CD8-positive, alpha-beta T cell (primary cell): ENCODE measurements at regions of chr22 and their contacts with region 1.

Region 1: GRCh38 chr22:37457093-37457893 is 28.9 kb downstream of the MFNG start:
- DNase-seq: peak; percentile 72 to 90 (median 83)
- ATAC-seq: peak; percentile 98
- H3K4me3 ChIP-seq: no peak overlapping the region
- H3K4me3 Mint-ChIP-seq: no peak overlapping the region
- H3K27ac ChIP-seq: no peak overlapping the region
- H3K27ac Mint-ChIP-seq: no peak overlapping the region
- H3K4me1 ChIP-seq: no peaks in the 10 kb centered on the region
- H3K4me1 Mint-ChIP-seq: no peaks in the 10 kb centered on the region
- H3K27me3 ChIP-seq: no peaks in the 10 kb centered on the region
- H3K27me3 Mint-ChIP-seq: no peaks in the 10 kb centered on the region
- CTCF ChIP-seq: peak; percentile 82

Region 2: DNA sequence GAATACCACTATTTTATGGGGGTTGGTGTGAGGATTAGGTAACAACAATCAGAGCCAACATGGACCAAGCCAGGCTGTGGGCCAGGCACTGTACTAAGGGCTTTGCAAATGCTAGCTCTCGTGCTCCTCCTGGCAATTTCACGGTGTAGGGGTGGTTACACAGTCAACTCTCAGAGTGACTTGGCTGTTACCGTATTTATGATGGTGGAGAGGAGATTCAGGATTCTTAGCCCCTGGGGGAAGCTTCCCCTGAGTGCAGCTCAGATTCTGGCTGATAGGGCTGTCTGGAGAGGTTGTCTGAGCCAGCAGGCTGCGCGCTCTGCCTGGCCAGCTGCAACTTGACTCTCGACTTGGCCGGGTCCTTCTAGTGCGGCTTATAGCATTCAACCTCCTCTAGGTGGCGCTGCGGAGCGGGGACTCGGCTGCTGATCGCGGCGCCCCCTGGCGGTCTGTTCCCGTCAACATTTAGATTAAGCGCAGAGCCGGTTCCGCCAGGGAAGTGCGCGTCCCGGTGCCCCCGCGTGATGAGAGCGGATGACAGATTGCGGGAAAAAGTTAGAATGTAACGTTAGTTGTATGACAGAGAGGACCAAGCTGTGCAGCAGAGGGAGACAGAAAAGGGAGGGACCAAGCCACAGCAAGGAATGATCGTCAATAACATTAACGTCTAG is 601.0 kb before region 1 on chr22:
- CTCF ChIA-PET with region 1: no interaction called
- POLR2A ChIA-PET with region 1: no interaction called
- intact Hi-C with region 1: loop called in 1 of 2 experiments (anchors 5 kb)
- DNase-seq: peak; percentile 86 to 99 (median 94)
- ATAC-seq: peak; percentile 78
- H3K4me3 ChIP-seq: no peak overlapping the region
- H3K4me3 Mint-ChIP-seq: peak overlapping the region; percentile 13
- H3K27ac ChIP-seq: no peak overlapping the region
- H3K27ac Mint-ChIP-seq: no peak overlapping the region
- H3K4me1 ChIP-seq: peaks cover 16% of the 10 kb centered on the region
- H3K4me1 Mint-ChIP-seq: peaks cover 13% of the 10 kb centered on the region
- H3K27me3 ChIP-seq: no peaks in the 10 kb centered on the region
- H3K27me3 Mint-ChIP-seq: no peaks in the 10 kb centered on the region
- CTCF ChIP-seq: peak; percentile 100

Region 3: GRCh38 chr22:37166675-37167066 is 290.6 kb before region 1 on chr22:
- CTCF ChIA-PET with region 1: no interaction called
- POLR2A ChIA-PET with region 1: no interaction called
- intact Hi-C with region 1: loop called in 1 of 2 experiments (anchors 2 kb)
- DNase-seq: peak; percentile 73 to 92 (median 86)
- ATAC-seq: peak; percentile 43
- H3K4me3 ChIP-seq: peak overlapping the region; percentile 42 to 60
- H3K4me3 Mint-ChIP-seq: peak overlapping the region; percentile 91
- H3K27ac ChIP-seq: peak overlapping the region; percentile 49 to 75
- H3K27ac Mint-ChIP-seq: peak overlapping the region; percentile 94
- H3K4me1 ChIP-seq: peaks cover 88% of the 10 kb centered on the region
- H3K4me1 Mint-ChIP-seq: peaks cover 96% of the 10 kb centered on the region
- H3K27me3 ChIP-seq: no peaks in the 10 kb centered on the region
- H3K27me3 Mint-ChIP-seq: no peaks in the 10 kb centered on the region
- CTCF ChIP-seq: peak; percentile 91

Region 4: DNA sequence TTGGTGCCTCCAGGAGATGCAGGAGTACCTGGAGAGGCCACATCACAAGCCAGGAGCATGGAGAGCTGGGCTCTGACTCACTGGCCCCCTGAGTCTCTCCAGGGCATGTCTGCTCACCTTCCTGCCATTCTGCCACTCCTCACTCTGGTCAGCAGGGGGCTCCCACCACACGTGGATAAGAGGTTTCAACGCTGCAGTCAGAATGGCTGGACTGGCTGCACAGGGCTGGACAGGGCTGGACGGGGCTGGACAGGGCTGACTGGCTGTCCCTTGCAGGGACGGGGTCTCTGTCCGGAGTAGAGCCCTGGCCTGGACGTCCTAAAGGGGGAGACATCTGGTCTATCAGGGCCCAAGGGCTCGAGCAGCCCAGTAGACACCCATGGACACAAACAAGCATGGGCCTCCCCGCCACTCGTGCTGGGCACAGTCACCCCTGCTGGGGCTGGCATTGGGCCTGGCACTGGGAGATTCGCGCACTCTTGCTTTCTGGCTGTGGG is 140.4 kb before region 1 on chr22:
- CTCF ChIA-PET with region 1: interaction called, 34 read pairs
- POLR2A ChIA-PET with region 1: no interaction called
- intact Hi-C with region 1: loop called (anchors 1 kb)
- DNase-seq: peak; percentile 37 to 85 (median 72)
- ATAC-seq: peak; percentile 91
- H3K4me3 ChIP-seq: no peak overlapping the region
- H3K4me3 Mint-ChIP-seq: no peak overlapping the region
- H3K27ac ChIP-seq: no peak overlapping the region
- H3K27ac Mint-ChIP-seq: no peak overlapping the region
- H3K4me1 ChIP-seq: peaks cover 36% of the 10 kb centered on the region
- H3K4me1 Mint-ChIP-seq: peaks cover 42% of the 10 kb centered on the region
- H3K27me3 ChIP-seq: no peaks in the 10 kb centered on the region
- H3K27me3 Mint-ChIP-seq: no peaks in the 10 kb centered on the region
- CTCF ChIP-seq: peak; percentile 85

Region 5: GRCh38 chr22:37472418-37473006 is 15.2 kb after region 1 on chr22:
- CTCF ChIA-PET with region 1: interaction called, 23 read pairs
- POLR2A ChIA-PET with region 1: no interaction called
- intact Hi-C with region 1: no loop called
- DNase-seq: peak in 8 of 9 experiments; percentile 19 to 71 (median 60)
- ATAC-seq: peak; percentile 44
- H3K4me3 ChIP-seq: no peak overlapping the region
- H3K4me3 Mint-ChIP-seq: no peak overlapping the region
- H3K27ac ChIP-seq: no peak overlapping the region
- H3K27ac Mint-ChIP-seq: peak overlapping the region; percentile 74
- H3K4me1 ChIP-seq: no peaks in the 10 kb centered on the region
- H3K4me1 Mint-ChIP-seq: peaks cover 11% of the 10 kb centered on the region
- H3K27me3 ChIP-seq: no peaks in the 10 kb centered on the region
- H3K27me3 Mint-ChIP-seq: no peaks in the 10 kb centered on the region
- CTCF ChIP-seq: peak; percentile 30